ENCODE measurements at regions of chrX and their contacts with region 1.

Region 1: GRCh38 chrX:145825896-145826295 is 8.3 kb downstream of the SLITRK2 start:
- DNase-seq: peak in 1 of 6 donors; percentile 23
- ATAC-seq: no peak
- H3K4me3 ChIP-seq: no peak overlapping the region
- H3K27ac ChIP-seq: no peak overlapping the region
- H3K4me1 ChIP-seq: no peaks in the 10 kb centered on the region
- H3K27me3 ChIP-seq: peaks cover 0 to 8% (median 0%) of the 10 kb centered on the region in 4 donors
- CTCF ChIP-seq: peak in 1 of 4 donors; percentile 11

Region 2: DNA sequence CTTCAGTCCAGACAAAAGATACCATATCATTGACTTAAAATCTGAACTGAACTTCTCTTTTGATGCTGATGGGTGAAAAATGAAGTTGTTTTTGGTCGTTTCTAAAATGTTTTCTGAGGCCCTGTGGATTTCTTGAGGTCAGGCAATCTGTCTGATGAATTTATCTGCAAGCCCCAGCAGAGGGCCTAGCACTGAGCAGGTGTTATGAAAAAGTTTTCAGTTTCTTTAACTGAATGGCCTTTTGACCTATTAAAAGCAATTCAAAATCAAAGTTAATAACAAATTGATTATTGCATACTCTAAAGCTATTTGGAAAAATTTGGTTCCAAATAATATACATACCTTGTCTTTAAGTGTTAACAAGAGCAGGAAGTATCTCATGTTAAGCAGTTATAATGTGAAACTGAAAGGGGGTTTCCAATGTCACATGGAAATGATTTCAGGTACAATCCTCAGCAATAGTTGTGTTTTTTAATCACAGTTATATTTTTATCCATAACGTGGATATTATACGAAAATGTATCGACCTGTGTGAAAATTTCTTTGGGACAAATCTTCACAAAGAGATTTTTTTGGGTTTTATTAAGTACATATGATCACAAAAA is 293.6 kb before region 1 on chrX:
- intact Hi-C with region 1: no loop called
- DNase-seq: no peak
- ATAC-seq: no peak
- H3K4me3 ChIP-seq: no peak overlapping the region
- H3K27ac ChIP-seq: no peak overlapping the region
- H3K4me1 ChIP-seq: no peaks in the 10 kb centered on the region
- H3K27me3 ChIP-seq: no peaks in the 10 kb centered on the region
- CTCF ChIP-seq: no peak

Region 3: DNA sequence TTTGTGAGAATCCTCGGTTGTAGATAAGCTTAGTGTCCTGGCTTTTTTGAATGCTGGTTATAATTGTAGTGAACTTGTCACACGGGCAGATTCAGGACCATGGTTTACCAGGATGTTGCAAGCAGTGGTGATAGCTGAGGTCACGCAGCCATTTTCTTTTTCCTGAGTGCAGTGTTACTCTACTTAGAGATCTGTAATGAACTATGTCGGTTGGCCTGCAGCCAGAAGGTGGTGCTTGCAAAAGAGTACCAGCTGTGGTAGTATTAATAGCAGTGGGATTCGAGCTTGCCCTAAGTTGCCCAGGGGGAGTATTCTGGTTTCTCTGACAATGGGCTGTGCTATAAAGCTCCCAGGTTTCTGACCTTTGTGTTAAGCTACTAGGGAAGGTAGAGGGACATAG is 360.6 kb after region 1 on chrX:
- intact Hi-C with region 1: loop called in 1 of 3 experiments (anchors 10 kb)
- DNase-seq: peak in 1 of 6 donors; percentile 23
- ATAC-seq: no peak
- H3K4me3 ChIP-seq: no peak overlapping the region
- H3K27ac ChIP-seq: no peak overlapping the region
- H3K4me1 ChIP-seq: no peaks in the 10 kb centered on the region
- H3K27me3 ChIP-seq: no peaks in the 10 kb centered on the region
- CTCF ChIP-seq: no peak

Measured in pancreas (tissue), 10 donors.